Right lobe of liver (tissue), 6 donors: ENCODE measurements at regions of chr11 and their contacts with region 1.

Region 1: DNA sequence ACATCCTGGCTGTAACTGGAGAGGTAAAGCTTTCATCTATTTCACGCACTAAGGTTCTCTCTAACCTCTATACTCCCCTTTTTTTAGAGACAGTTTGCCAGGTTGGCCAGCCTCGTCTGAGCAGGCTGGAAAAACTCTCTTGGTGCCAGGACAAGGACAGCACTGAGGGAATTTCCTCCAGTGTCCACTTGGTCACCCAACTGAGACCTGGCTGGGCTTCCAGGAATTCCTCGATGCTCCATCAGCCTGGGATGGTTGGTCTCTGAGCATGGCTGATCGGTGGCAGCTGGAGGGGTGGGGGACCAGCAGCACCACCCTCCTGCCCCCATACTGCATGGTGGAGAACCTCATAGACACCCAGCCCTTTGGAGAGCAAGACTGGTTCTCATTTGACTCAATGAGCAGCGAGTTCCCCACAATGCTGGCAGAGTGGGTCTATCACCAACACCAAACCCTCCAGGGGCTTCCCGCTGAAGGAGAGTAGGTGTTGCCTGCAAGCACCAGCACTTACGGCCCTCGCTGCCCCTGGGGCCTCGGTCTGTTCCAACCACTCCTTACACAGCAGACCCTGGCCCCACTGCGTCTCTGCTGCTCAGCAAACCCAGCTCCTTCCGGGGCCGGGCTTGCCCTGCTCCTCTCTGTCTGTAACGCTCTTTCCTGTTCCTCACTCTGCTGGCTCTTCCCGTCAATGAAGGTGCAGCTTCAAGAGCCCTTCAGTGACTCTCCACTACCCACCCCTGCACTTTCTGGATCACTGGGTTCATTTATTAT is 122.2 kb downstream of the ST3GAL4 start:
- DNase-seq: peak in 1 of 3 donors; percentile 52
- ATAC-seq: peak in 1 of 4 donors; percentile 31
- H3K4me3 ChIP-seq: no peak overlapping the region
- H3K27ac ChIP-seq: no peak overlapping the region
- H3K4me1 ChIP-seq: peaks cover 0 to 4% (median 2%) of the 10 kb centered on the region in 4 donors
- H3K27me3 ChIP-seq: no peaks in the 10 kb centered on the region
- CTCF ChIP-seq: no peak
- POLR2A ChIP-seq: no peak

Region 2: GRCh38 chr11:126310228-126310991 is 167.3 kb before region 1 on chr11:
- intact Hi-C with region 1: loop called (anchors 5 to 10 kb)
- DNase-seq: peak; percentile 69 to 76 (median 73)
- ATAC-seq: peak; percentile 97 to 98 (median 98)
- H3K4me3 ChIP-seq: no peak overlapping the region
- H3K27ac ChIP-seq: no peak overlapping the region
- H3K4me1 ChIP-seq: peaks cover 0 to 3% (median 0%) of the 10 kb centered on the region in 4 donors
- H3K27me3 ChIP-seq: no peaks in the 10 kb centered on the region
- CTCF ChIP-seq: peak; percentile 86 to 94 (median 90)
- POLR2A ChIP-seq: no peak

Region 3: GRCh38 chr11:126544108-126545056 is 66.7 kb after region 1 on chr11:
- intact Hi-C with region 1: no loop called
- DNase-seq: no peak
- ATAC-seq: no peak
- H3K4me3 ChIP-seq: no peak overlapping the region
- H3K27ac ChIP-seq: no peak overlapping the region
- H3K4me1 ChIP-seq: no peaks in the 10 kb centered on the region
- H3K27me3 ChIP-seq: no peaks in the 10 kb centered on the region
- CTCF ChIP-seq: no peak
- POLR2A ChIP-seq: no peak